ENCODE measurements at regions of chr10 and their contacts with region 1.

Region 1: GRCh38 chr10:94936721-94937120 is 1.7 kb upstream of the CYP2C9 start:
- DNase-seq: no peak
- H3K4me3 ChIP-seq: no peak overlapping the region
- H3K27ac ChIP-seq: no peak overlapping the region
- H3K4me1 ChIP-seq: no peaks in the 10 kb centered on the region
- H3K27me3 ChIP-seq: no peaks in the 10 kb centered on the region
- CTCF ChIP-seq: no peak

Region 2: GRCh38 chr10:94989192-94989591 is 52.5 kb after region 1 on chr10:
- CTCF ChIA-PET with region 1: no interaction called
- dilution Hi-C with region 1: no loop called
- in situ Hi-C with region 1: no loop called
- intact Hi-C with region 1: loop called (anchors 5 kb)
- DNase-seq: no peak
- H3K4me3 ChIP-seq: no peak overlapping the region
- H3K27ac ChIP-seq: no peak overlapping the region
- H3K4me1 ChIP-seq: no peaks in the 10 kb centered on the region
- H3K27me3 ChIP-seq: no peaks in the 10 kb centered on the region
- CTCF ChIP-seq: no peak

Region 3: DNA sequence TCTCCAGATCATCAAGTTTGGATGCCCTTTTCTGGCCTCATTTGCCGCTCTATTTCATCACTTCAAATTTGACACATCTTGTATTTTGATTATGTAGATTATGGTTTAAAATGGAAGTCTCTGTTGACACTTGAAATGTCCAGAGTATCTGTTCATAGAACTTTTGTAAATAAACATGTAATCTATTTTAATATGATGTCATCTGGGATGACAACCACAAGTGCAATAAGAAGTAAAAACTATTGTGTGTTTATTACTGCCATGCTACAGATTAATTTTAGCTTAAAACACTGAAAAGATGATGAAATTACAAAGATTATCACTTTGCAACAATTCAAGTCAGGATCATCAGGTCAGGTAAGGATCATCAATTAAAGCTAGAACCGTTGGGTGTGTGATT is 102.6 kb after region 1 on chr10:
- CTCF ChIA-PET with region 1: no interaction called
- dilution Hi-C with region 1: no loop called
- in situ Hi-C with region 1: no loop called
- intact Hi-C with region 1: no loop called
- DNase-seq: no peak
- H3K4me3 ChIP-seq: no peak overlapping the region
- H3K27ac ChIP-seq: no peak overlapping the region
- H3K4me1 ChIP-seq: no peaks in the 10 kb centered on the region
- H3K27me3 ChIP-seq: no peaks in the 10 kb centered on the region
- CTCF ChIP-seq: no peak